Activated naive CD4-positive, alpha-beta T cell treated with anti-CD3 and anti-CD28 coated beads for 36 hours (primary cell): ENCODE measurements at regions of chr19 and their contacts with region 1.

Region 1: GRCh38 chr19:45506246-45506990 is 861 bp upstream of the VASP start:
- DNase-seq: peak; percentile 99
- H3K4me3 Mint-ChIP-seq: peak overlapping the region; percentile 86
- H3K27ac Mint-ChIP-seq: peak overlapping the region; percentile 94
- H3K4me1 Mint-ChIP-seq: peaks cover 39% of the 10 kb centered on the region
- H3K27me3 Mint-ChIP-seq: no peaks in the 10 kb centered on the region

Region 2: DNA sequence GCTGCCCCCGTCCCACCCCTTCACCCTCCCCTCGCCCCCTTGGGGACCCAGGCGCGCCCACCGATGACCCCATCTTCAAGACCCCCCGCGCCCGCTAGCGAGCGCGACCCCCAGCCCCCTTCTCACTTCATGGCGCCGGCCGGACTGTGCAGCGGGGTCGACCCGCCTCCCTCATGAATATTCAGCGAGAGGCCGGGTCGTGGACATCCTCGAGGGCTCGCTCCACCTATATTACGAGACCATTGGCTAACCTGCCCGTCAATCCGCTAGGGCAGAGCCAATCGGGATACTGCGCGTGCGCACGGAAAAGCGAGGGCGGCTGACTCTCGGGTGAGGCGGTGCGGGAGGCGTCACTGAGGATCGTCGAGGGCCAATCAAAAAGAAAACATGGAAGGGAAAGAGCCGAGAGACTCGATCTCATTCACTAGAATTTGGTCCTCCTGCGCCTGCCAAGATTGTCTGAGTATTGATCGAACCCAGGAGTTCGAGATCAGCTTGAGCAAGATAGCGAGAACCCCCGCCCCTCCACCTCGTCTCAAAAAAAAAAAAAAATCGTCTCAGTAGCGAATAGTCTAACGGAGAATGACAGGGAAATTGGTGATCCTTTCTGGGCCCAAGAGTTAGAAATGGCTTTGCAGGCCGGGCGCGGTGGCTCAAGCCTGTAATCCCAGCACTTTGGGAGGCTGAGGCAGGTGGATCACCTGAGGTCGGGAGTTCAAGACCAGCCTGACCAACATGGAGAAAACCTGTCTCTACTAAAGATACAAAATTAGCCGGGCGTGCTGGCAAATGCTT is 135.8 kb before region 1 on chr19 and contains the start of gene ERCC2:
- CTCF ChIA-PET with region 1: no interaction called
- intact Hi-C with region 1: loop called (anchors 1 kb)
- DNase-seq: peak; percentile 100
- H3K4me3 Mint-ChIP-seq: peak within 1 kb of the TSS; percentile 93
- H3K27ac Mint-ChIP-seq: peak within 1 kb of the TSS; percentile 91
- H3K4me1 Mint-ChIP-seq: peaks cover 5% of the 10 kb centered on the region
- H3K27me3 Mint-ChIP-seq: no peaks in the 10 kb centered on the region
- total RNA-seq, gene ERCC2: 20.6 to 22.9 TPM

Region 3: GRCh38 chr19:45469132-45469944 is 37.1 kb before region 1 on chr19:
- CTCF ChIA-PET with region 1: no interaction called
- intact Hi-C with region 1: loop called (anchors 1 kb)
- DNase-seq: peak; percentile 91
- H3K4me3 Mint-ChIP-seq: peak overlapping the region; percentile 77
- H3K27ac Mint-ChIP-seq: peak overlapping the region; percentile 75
- H3K4me1 Mint-ChIP-seq: peaks cover 42% of the 10 kb centered on the region
- H3K27me3 Mint-ChIP-seq: peaks cover 26% of the 10 kb centered on the region

Region 4: DNA sequence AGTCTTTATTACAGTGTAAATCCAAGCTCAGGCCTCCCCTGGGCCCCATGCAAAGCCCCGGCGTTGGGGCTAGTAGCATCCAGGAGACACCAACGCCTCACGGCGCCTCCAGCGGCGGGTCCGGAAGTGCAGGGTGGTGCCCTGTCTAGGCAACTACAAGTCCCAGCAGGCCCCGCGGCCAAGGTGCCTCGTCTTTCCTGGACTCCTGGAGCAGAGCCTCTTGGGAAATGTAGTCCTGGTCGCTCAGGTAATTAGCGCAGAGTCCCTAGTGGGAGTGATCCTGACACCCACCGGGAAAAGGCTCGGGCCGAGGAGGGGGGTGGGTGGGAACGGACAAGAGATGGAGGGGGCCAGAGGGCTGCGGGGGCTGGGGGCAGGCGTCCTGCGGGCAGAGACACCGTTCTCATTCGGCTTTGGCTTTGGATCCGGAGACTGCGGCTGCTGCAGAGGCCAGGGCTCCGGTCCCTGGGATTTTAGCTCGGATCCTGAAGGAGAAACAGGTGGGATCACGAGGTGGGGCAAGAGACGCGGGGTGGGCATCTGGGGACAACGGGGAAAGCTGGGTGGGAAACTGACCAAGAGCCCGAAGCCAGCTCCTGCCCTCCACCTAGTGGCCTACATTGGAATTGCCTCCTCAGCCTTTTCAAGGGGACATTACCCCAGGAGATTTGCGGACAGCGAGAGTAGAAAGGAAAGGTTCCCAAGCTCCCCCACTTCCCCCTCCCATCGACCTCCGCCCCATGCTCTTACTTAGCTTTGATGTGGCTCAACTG is 20.9 kb before region 1 on chr19:
- CTCF ChIA-PET with region 1: interaction called, 10 read pairs
- intact Hi-C with region 1: no loop called
- DNase-seq: peak; percentile 99
- H3K4me3 Mint-ChIP-seq: peak overlapping the region; percentile 81
- H3K27ac Mint-ChIP-seq: peak overlapping the region; percentile 46
- H3K4me1 Mint-ChIP-seq: peaks cover 4% of the 10 kb centered on the region
- H3K27me3 Mint-ChIP-seq: no peaks in the 10 kb centered on the region

Region 5: DNA sequence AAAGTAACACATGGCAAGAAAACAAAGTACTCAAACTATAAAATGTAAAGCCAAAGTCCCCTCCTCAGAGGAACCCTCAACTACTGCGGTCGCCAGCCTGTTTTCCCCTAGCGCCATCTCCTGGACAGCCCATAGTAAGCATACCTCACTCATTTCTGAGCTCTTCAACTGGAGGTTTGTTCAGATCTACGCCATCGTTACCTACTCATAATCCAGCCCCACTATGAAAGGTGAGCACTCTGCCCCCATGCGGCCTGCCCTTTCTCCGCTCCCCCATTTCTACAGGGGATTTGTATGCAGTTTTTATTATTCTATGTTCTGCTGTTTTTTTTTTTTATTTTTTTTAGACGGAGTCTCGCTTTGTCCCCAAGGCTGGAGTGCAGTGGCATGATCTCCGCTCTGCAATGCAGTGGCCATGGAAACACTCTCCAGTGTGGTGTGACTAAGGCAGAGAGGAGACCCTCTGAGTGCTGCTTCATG is 52.0 kb after region 1 on chr19:
- CTCF ChIA-PET with region 1: interaction called, 5 read pairs
- intact Hi-C with region 1: loop called (anchors 1 kb)
- DNase-seq: peak; percentile 88
- H3K4me3 Mint-ChIP-seq: no peak overlapping the region
- H3K27ac Mint-ChIP-seq: no peak overlapping the region
- H3K4me1 Mint-ChIP-seq: peaks cover 30% of the 10 kb centered on the region
- H3K27me3 Mint-ChIP-seq: no peaks in the 10 kb centered on the region

Region 6: GRCh38 chr19:45705115-45705514 is 198.7 kb after region 1 on chr19:
- CTCF ChIA-PET with region 1: no interaction called
- intact Hi-C with region 1: no loop called
- DNase-seq: no peak
- H3K4me3 Mint-ChIP-seq: no peak overlapping the region
- H3K27ac Mint-ChIP-seq: no peak overlapping the region
- H3K4me1 Mint-ChIP-seq: peaks cover 5% of the 10 kb centered on the region
- H3K27me3 Mint-ChIP-seq: no peaks in the 10 kb centered on the region

Region 7: DNA sequence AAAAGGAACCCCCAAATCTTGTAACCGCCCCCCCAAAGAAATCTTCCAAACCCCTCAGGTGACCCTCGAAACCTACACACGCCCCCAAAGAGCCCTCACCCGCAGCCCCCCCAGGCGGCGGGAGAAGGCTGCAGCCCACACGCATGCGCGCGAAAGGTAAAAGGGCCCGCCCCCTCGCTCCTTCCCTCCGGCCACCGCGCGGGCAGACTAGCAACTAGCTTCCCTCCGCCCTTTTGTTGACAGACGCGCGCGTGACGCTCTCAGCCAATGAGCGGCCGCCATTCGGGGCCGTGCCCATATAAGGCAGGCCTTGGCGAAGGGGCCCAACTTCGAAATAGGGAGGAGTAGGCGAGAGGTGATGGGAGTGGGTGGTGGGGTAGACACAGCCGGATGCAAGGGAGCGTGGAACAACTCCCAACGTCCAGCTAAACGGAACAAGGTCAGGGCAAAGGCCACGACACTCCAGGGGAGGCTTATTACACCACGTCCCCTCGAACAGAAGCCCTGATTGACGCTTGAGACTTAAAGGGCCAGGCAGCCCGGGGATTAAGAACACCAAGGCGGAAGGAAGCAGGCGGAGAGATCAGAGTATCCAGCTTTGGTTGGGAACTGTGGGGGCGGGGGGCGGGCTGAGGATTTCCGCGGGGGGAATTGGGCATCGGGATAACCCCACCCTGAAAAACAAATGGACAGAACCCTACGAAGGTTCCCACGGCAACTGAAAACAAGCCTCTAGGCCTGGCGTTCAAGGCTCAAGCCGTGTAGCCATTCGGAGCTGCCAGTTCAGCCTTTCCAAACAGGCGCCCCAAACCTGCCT is 211.0 kb after region 1 on chr19:
- CTCF ChIA-PET with region 1: no interaction called
- intact Hi-C with region 1: loop called (anchors 1 kb)
- DNase-seq: peak; percentile 99
- H3K4me3 Mint-ChIP-seq: peak overlapping the region; percentile 96
- H3K27ac Mint-ChIP-seq: peak overlapping the region; percentile 97
- H3K4me1 Mint-ChIP-seq: peaks cover 41% of the 10 kb centered on the region
- H3K27me3 Mint-ChIP-seq: no peaks in the 10 kb centered on the region

Region 8: DNA sequence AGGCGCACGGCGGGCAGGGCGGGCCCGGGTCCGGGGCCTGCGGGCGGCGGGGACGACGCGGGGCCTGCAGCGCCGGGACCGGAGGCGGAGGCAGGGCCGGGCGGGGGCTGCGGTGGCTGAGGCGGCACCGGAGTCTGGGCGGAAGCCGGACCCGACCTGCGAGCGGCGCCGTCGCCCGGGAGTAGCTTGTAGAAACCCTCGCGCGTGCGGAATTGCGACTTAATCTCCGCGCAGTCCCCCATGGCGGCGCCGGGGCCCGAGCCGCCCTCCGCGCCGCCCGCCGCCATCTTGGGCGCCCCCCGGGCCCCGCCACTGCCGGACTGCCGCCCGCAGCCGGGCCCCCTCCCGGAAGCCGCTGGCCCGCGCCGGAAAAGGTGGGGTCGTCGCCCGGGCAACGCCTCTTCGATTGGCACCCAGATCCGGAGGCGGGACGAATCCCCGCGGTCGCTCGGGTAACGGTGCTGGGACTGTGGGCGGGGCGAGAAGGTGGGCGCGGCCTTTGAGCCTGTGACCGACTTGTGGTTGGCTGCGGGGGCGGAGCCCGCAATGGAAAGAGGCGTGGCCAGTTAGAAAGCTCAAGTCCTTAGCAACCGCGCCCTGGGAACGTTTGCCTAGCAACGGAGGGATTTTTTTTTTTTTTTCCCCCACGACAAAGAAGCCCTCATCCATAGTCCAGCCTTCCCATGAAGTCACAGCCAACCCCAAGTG is 286.2 kb after region 1 on chr19 and contains the start of gene DMWD:
- CTCF ChIA-PET with region 1: no interaction called
- intact Hi-C with region 1: loop called (anchors 10 kb)
- DNase-seq: peak; percentile 100
- H3K4me3 Mint-ChIP-seq: peak within 1 kb of the TSS; percentile 93
- H3K27ac Mint-ChIP-seq: peak within 1 kb of the TSS; percentile 71
- H3K4me1 Mint-ChIP-seq: peaks cover 24% of the 10 kb centered on the region
- H3K27me3 Mint-ChIP-seq: peaks cover 13% of the 10 kb centered on the region
- total RNA-seq, gene DMWD: 28.6 to 29.1 TPM